GM12878 (cell line): ENCODE measurements at regions of chr6 and their contacts with region 1.

Region 1: DNA sequence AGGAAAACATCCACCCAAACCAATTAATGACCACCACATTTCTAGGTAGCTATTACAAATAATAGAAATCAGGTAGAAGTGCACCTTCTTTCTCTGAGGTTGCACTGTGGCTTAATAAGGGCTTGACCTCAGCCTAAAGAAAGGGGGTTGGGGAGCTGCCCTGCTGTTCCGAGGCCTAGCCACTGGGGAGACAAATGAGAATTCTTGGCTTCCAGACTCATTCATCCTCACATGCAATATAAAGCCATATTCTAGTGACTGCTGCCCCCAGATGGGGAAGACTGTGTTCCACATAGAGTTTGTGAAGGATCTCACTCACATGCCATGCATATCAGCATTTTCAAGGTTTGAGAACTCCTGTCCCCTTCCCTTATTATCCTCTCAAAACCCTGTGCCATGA is 22.9 kb downstream of the SAYSD1 start:
- DNase-seq: no peak
- ATAC-seq: peak; percentile 73
- H3K4me3 ChIP-seq: no peak overlapping the region
- H3K27ac ChIP-seq: no peak overlapping the region
- H3K4me1 ChIP-seq: no peaks in the 10 kb centered on the region
- H3K27me3 ChIP-seq: peaks cover 0 to 16% of the 10 kb centered on the region in 2 experiments
- CTCF ChIP-seq: peak; percentile 17 to 46 (median 27); a peak in 4 of 6 replicates
- EP300 ChIP-seq: no peak
- POLR2A ChIP-seq: no peak
- RAD21 ChIP-seq: peak; percentile 48

Region 2: GRCh38 chr6:38997128-38997761 is 94.9 kb before region 1 on chr6:
- CTCF ChIA-PET with region 1: interaction called, 10 read pairs
- POLR2A ChIA-PET with region 1: no interaction called
- RAD21 ChIA-PET with region 1: interaction called, 9 read pairs
- SMC1A ChIA-PET with region 1: interaction called, 3 read pairs
- in situ Hi-C with region 1: no loop called
- intact Hi-C with region 1: no loop called
- DNase-seq: no peak
- ATAC-seq: peak; percentile 51
- H3K4me3 ChIP-seq: no peak overlapping the region
- H3K27ac ChIP-seq: no peak overlapping the region
- H3K4me1 ChIP-seq: no peaks in the 10 kb centered on the region
- H3K27me3 ChIP-seq: no peaks in the 10 kb centered on the region
- CTCF ChIP-seq: peak; percentile 64 to 68 (median 64)
- EP300 ChIP-seq: no peak
- POLR2A ChIP-seq: no peak
- RAD21 ChIP-seq: peak; percentile 70

Region 3: DNA sequence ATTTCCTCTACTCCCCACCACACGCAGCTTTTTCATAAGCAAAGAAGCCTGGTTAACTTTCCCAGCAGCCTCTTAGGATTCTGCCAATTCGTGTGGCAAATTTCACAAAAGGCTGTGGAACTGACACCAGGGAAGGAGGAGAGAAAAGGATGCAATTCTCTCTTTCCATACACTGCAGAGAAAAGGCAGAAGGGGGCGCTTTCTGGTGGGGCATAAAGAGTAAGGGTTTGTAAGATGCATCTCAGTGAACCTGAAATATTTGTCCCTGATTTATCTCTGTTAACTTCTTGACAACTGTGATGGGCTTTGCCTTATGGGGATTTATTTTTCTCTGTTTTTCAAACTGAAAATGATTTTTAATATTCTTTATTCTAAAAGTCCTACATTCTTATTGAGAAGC is 89.1 kb before region 1 on chr6:
- CTCF ChIA-PET with region 1: interaction called, 3 read pairs
- POLR2A ChIA-PET with region 1: no interaction called
- RAD21 ChIA-PET with region 1: interaction called, 9 read pairs
- SMC1A ChIA-PET with region 1: interaction called, 3 read pairs
- in situ Hi-C with region 1: no loop called
- intact Hi-C with region 1: loop called (anchors 1 kb)
- DNase-seq: no peak
- ATAC-seq: no peak
- H3K4me3 ChIP-seq: no peak overlapping the region
- H3K27ac ChIP-seq: no peak overlapping the region
- H3K4me1 ChIP-seq: no peaks in the 10 kb centered on the region
- H3K27me3 ChIP-seq: no peaks in the 10 kb centered on the region
- CTCF ChIP-seq: peak; percentile 14 to 34 (median 25); a peak in 4 of 6 replicates
- EP300 ChIP-seq: no peak
- POLR2A ChIP-seq: no peak
- RAD21 ChIP-seq: peak; percentile 36

Region 4: DNA sequence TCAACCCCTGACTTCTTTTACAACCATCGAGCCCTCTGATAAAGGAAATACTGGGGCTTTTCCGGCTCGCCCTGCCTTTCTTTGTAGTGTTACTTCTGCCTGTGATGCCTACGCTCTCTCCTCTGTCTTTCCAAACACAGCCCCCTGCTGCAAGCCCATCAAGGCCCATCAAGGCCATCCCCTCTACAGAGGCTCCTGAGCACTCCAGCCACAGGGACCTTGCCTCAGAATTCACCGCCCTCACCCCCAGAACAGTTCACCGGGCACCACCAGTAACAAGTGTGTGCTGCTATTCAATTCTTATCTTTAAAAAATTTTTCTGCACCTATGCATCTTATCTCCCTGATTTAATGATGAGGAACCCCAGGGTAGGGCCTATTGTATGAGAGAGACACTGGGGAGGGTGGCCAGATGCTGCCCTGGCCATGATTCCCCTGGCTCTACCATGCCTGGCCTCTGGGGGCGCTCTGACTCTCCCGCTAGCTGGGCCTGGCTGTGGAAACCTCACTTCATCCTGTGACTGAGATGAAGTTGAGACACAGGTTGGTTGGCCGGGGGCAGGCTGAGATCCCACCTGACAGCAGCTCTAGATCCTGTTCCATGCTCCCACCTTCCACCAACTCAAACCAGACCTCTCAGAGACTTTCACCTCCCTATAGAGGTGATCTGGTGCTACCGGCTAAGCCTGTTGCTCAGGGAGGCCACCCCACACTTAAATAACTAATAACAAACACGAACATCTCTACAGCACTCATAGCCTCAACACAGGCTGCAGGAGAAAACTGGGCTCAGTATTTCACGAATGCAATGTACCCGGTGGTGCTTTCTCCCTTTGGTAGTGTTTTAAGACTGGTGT is 62.7 kb before region 1 on chr6:
- CTCF ChIA-PET with region 1: interaction called, 4 read pairs
- POLR2A ChIA-PET with region 1: no interaction called
- RAD21 ChIA-PET with region 1: no interaction called
- SMC1A ChIA-PET with region 1: no interaction called
- in situ Hi-C with region 1: no loop called
- intact Hi-C with region 1: loop called (anchors 5 kb)
- DNase-seq: no peak
- ATAC-seq: peak; percentile 96
- H3K4me3 ChIP-seq: no peak overlapping the region
- H3K27ac ChIP-seq: no peak overlapping the region
- H3K4me1 ChIP-seq: no peaks in the 10 kb centered on the region
- H3K27me3 ChIP-seq: no peaks in the 10 kb centered on the region; a peak in 1 of 4 replicates
- CTCF ChIP-seq: peak; percentile 79 to 94 (median 83)
- EP300 ChIP-seq: no peak
- POLR2A ChIP-seq: no peak
- RAD21 ChIP-seq: peak; percentile 57

Region 5: GRCh38 chr6:39102071-39102820 is 10.1 kb after region 1 on chr6:
- CTCF ChIA-PET with region 1: interaction called, 10 read pairs
- POLR2A ChIA-PET with region 1: no interaction called
- RAD21 ChIA-PET with region 1: no interaction called
- SMC1A ChIA-PET with region 1: interaction called, 6 read pairs
- in situ Hi-C with region 1: no loop called
- intact Hi-C with region 1: no loop called
- DNase-seq: no peak
- ATAC-seq: peak; percentile 73
- H3K4me3 ChIP-seq: no peak overlapping the region
- H3K27ac ChIP-seq: no peak overlapping the region
- H3K4me1 ChIP-seq: no peaks in the 10 kb centered on the region
- H3K27me3 ChIP-seq: no peaks in the 10 kb centered on the region
- CTCF ChIP-seq: peak; percentile 34 to 49 (median 48); a peak in 5 of 6 replicates
- EP300 ChIP-seq: no peak
- POLR2A ChIP-seq: no peak
- RAD21 ChIP-seq: no peak